GM12878 (cell line): ENCODE measurements at regions of chr18 and their contacts with region 1.

Region 1: DNA sequence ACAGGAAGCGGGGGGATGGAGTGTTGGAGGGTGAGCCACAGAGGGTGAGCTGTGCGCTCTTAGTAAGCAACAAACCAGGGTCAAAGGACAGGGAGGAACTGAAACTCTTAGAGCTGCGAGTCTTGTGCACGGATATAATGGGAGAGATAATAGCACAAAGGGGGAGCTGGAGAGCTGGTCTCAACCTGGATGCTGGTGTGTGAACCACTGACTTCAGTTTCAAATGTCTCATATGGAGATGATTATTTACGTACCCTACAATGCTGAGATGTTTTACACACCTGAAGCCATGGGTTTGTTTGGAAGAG is 35.9 kb downstream of the PTGR3 start:
- DNase-seq: peak; percentile 64
- ATAC-seq: peak; percentile 100
- H3K4me3 ChIP-seq: no peak overlapping the region
- H3K27ac ChIP-seq: no peak overlapping the region
- H3K4me1 ChIP-seq: peaks cover 15% of the 10 kb centered on the region
- H3K27me3 ChIP-seq: no peaks in the 10 kb centered on the region
- CTCF ChIP-seq: peak; percentile 44 to 66 (median 49); a peak in 5 of 6 replicates
- EP300 ChIP-seq: peak in 1 of 2 experiments; percentile 85; a peak in 2 of 4 replicates
- POLR2A ChIP-seq: no peak
- RAD21 ChIP-seq: peak; percentile 62

Region 2: DNA sequence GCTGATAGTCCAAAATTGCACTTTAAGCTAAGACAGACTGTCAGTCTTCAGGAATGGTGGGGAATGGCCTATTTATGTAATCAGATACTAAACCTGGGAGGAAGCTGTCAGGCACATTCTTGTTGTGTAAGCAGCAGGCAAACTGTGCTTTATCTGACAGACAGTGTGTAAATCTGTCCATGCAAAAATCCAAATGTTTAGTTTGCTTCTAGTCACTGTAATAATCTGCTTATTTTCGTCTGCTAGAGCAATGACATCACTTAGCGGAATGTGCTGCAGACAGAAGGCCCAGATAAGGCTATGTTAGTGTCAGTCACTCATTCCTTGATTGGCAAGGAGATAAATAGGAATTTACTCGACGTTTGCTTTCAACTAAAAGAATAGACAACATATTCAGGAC is 311.9 kb before region 1 on chr18:
- CTCF ChIA-PET with region 1: no interaction called
- POLR2A ChIA-PET with region 1: no interaction called
- RAD21 ChIA-PET with region 1: no interaction called
- SMC1A ChIA-PET with region 1: no interaction called
- in situ Hi-C with region 1: no loop called
- intact Hi-C with region 1: no loop called
- DNase-seq: no peak
- ATAC-seq: no peak
- H3K4me3 ChIP-seq: no peak overlapping the region
- H3K27ac ChIP-seq: no peak overlapping the region
- H3K4me1 ChIP-seq: no peaks in the 10 kb centered on the region
- H3K27me3 ChIP-seq: no peaks in the 10 kb centered on the region
- CTCF ChIP-seq: no peak
- EP300 ChIP-seq: no peak
- POLR2A ChIP-seq: no peak
- RAD21 ChIP-seq: no peak

Region 3: GRCh38 chr18:75341267-75341666 is 168.2 kb after region 1 on chr18:
- CTCF ChIA-PET with region 1: interaction called, 3 read pairs
- POLR2A ChIA-PET with region 1: no interaction called
- RAD21 ChIA-PET with region 1: interaction called, 5 read pairs
- SMC1A ChIA-PET with region 1: no interaction called
- in situ Hi-C with region 1: no loop called
- intact Hi-C with region 1: loop called (anchors 10 kb)
- DNase-seq: no peak
- ATAC-seq: no peak
- H3K4me3 ChIP-seq: no peak overlapping the region
- H3K27ac ChIP-seq: no peak overlapping the region
- H3K4me1 ChIP-seq: no peaks in the 10 kb centered on the region
- H3K27me3 ChIP-seq: no peaks in the 10 kb centered on the region
- CTCF ChIP-seq: no peak
- EP300 ChIP-seq: no peak
- POLR2A ChIP-seq: no peak
- RAD21 ChIP-seq: no peak